ENCODE measurements at regions of chr1 and their contacts with region 1.

Region 1: DNA sequence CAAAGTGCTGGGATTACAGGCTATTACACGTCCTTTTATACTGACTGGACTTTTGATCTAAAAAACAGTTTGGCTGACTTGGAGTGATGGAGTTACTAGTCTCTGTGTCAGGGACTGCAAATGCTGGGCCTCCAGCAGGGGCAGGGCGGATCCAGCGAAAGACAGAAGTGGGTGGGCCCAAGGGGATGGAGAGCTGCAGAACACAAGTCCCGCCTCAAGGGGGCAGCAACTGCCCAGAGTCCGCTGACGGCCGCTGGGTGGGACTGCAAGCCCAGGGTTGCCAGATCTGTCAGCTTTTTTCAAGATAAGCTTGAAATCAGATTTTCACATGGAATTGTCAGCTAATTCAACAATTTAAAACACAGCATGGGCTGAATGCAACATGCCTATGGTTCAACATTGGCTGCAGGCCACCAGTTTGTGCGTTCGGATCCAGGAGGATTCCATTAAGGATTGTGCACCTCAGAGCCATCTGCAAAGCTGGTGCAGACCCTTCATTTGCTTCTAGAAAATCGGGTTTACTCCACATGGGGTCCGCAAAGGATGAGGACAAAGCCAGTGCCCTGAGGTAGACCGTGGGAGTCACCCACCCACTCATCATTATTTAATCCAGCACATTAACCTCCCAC is 10.7 kb downstream of the STMN1 start:
- DNase-seq: peak; percentile 79 to 96
- H3K4me3 ChIP-seq: no peak overlapping the region
- H3K27ac ChIP-seq: no peak overlapping the region
- H3K4me1 ChIP-seq: peaks cover 0 to 16% (median 9%) of the 10 kb centered on the region in 4 experiments; a peak in 6 of 7 replicates
- H3K27me3 ChIP-seq: no peaks in the 10 kb centered on the region
- CTCF ChIP-seq: peak; percentile 95 to 100 (median 99)
- EP300 ChIP-seq: no peak
- POLR2A ChIP-seq: no peak
- RAD21 ChIP-seq: peak; percentile 94 to 98

Region 2: DNA sequence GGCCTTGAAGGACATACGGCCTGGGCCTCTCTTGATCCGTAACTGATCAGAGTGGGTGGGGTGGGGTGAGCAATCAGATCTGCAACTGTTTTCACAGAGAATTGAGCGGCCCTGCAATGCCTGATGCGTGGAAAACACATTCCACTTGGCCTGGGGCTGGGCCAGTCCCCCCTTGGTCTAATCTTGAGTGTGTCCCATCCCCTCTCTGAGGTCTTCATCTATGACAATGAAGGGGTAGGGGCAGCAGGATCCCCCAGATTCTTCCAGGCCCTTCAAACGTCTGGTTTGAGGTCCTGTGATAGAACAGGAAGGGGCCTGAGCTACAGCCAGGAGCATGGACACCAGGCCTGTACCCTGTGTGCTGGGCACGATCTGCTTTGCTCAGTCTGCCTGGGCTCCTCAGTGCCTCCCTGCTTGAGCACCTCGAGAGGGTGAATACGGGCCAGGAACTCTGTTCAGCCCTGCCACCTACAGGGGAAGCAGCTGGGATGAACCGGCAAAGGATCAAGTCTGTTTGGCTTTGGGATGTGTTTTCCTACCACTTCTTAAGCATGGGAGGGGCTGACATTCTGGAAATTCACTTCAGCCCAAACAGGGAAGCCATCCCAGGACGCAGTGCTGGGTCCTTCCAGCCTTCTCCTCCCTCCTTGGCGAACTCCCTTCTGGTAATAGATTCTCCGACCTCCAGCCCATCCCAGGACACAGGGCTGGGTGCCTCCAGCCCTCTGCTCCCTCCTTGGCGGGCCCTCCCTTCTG is 151.5 kb before region 1 on chr1:
- CTCF ChIA-PET with region 1: no interaction called
- POLR2A ChIA-PET with region 1: no interaction called
- DNase-seq: peak; percentile 47 to 63
- H3K4me3 ChIP-seq: no peak overlapping the region
- H3K27ac ChIP-seq: no peak overlapping the region
- H3K4me1 ChIP-seq: peaks cover 12 to 33% (median 17%) of the 10 kb centered on the region in 4 experiments
- H3K27me3 ChIP-seq: no peaks in the 10 kb centered on the region; a peak in 1 of 7 replicates
- CTCF ChIP-seq: peak; percentile 55 to 69 (median 65)
- EP300 ChIP-seq: no peak
- POLR2A ChIP-seq: no peak
- RAD21 ChIP-seq: peak; percentile 61 to 78

Region 3: DNA sequence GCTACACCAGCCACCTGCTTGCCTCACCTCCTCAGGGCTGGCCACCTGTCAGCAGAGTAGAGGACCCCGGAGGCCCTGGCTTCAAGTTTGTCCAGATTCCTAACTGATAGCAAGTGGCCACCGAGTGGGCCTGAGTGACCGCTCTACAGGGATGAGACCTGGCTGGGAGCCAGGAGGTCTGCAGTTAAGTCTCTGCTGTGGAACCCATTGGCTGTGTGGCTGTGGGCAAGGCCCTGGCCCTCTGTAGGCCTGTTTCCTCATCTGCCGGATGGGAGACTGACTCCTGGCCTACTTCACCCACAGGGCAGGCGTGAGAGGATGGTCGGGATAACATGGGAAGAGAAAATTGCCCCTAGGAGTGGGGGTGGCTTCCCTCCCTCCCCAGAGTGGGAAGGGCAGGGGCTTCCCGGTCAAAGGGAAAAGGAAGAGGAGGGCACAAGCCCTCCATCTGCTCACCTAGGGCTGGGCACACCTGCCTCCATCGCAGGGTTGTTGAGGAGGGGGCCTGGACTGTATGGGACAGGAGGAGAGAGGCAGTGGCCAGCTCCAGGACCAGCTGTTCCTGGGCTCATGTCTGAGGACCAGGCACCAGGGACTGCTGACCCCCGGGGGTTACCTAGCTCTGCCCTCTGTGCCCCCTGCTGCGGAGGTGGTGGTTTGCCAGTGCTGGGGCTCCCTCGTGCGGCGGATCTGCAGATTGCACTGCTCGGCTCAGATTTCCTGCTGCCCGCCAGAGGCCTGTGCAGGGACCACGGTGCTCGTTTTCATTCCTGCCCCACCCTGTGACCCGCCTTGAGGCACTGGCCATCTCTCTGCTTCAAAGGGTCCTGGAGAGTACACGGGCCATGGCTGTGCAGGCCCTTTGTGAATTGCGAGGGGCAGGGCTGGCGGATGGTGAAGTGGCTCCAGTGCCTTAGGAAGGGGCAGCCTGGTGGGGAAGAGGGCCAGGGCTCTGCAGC is 84.9 kb before region 1 on chr1:
- CTCF ChIA-PET with region 1: interaction called, 11 read pairs
- POLR2A ChIA-PET with region 1: interaction called, 4 read pairs
- DNase-seq: peak; percentile 59 to 100
- H3K4me3 ChIP-seq: no peak overlapping the region
- H3K27ac ChIP-seq: no peak overlapping the region
- H3K4me1 ChIP-seq: peaks cover 0 to 5% (median under 1%) of the 10 kb centered on the region in 4 experiments; a peak in 2 of 7 replicates
- H3K27me3 ChIP-seq: no peaks in the 10 kb centered on the region
- CTCF ChIP-seq: peak; percentile 98 to 100 (median 99)
- EP300 ChIP-seq: no peak
- POLR2A ChIP-seq: no peak
- RAD21 ChIP-seq: peak; percentile 99 to 100

Region 4: GRCh38 chr1:25834894-25835293 is 60.6 kb before region 1 on chr1:
- CTCF ChIA-PET with region 1: interaction called, 12 read pairs
- POLR2A ChIA-PET with region 1: no interaction called
- DNase-seq: no peak
- H3K4me3 ChIP-seq: no peak overlapping the region
- H3K27ac ChIP-seq: no peak overlapping the region
- H3K4me1 ChIP-seq: no peaks in the 10 kb centered on the region
- H3K27me3 ChIP-seq: no peaks in the 10 kb centered on the region
- CTCF ChIP-seq: no peak
- EP300 ChIP-seq: no peak
- POLR2A ChIP-seq: no peak
- RAD21 ChIP-seq: no peak

Region 5: GRCh38 chr1:25927521-25928265 is 32.2 kb after region 1 on chr1:
- CTCF ChIA-PET with region 1: interaction called, 13 read pairs
- POLR2A ChIA-PET with region 1: interaction called, 6 read pairs
- DNase-seq: no peak
- H3K4me3 ChIP-seq: no peak overlapping the region
- H3K27ac ChIP-seq: no peak overlapping the region
- H3K4me1 ChIP-seq: peaks cover 4 to 12% (median 7%) of the 10 kb centered on the region in 4 experiments
- H3K27me3 ChIP-seq: peaks cover 0 to 4% (median 0%) of the 10 kb centered on the region in 4 experiments; a peak in 2 of 7 replicates
- CTCF ChIP-seq: no peak
- EP300 ChIP-seq: no peak
- POLR2A ChIP-seq: no peak
- RAD21 ChIP-seq: no peak

Region 6: DNA sequence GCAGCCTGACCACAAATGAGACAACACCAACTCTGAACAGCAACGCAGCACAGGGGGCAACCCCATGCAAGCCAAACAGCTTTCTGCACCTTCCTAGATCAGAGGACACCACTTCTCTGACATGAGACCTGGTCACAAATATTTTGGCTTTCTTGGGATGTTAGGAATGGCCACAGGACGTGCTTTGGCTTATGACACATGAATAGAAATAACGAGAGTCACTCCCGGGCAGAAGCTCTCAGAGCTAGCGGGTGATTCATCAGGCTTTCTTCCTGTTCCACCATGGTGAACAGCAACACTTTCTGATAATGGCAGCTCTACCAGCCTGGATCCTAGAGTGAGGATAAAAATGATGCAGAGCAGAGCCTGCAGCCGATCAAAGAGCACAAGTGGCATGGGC is 63.0 kb after region 1 on chr1:
- CTCF ChIA-PET with region 1: interaction called, 37 read pairs
- POLR2A ChIA-PET with region 1: interaction called, 3 read pairs
- DNase-seq: no peak
- H3K4me3 ChIP-seq: no peak overlapping the region
- H3K27ac ChIP-seq: no peak overlapping the region
- H3K4me1 ChIP-seq: peaks cover 0 to 5% (median 3%) of the 10 kb centered on the region in 4 experiments; a peak in 2 of 7 replicates
- H3K27me3 ChIP-seq: no peaks in the 10 kb centered on the region
- CTCF ChIP-seq: no peak
- EP300 ChIP-seq: no peak
- POLR2A ChIP-seq: no peak
- RAD21 ChIP-seq: no peak

Region 7: GRCh38 chr1:25997828-25998761 is 102.6 kb after region 1 on chr1 and contains the start of gene PAFAH2:
- CTCF ChIA-PET with region 1: interaction called, 330 read pairs
- POLR2A ChIA-PET with region 1: interaction called, 13 read pairs
- DNase-seq: peak; percentile 95 to 97
- H3K4me3 ChIP-seq: peak within 1 kb of the TSS; percentile 42 to 86 (median 80)
- H3K27ac ChIP-seq: peak within 1 kb of the TSS; percentile 57; the same call in 1 of the 2 replicates
- H3K4me1 ChIP-seq: peaks cover 2 to 14% (median 8%) of the 10 kb centered on the region in 4 experiments; a peak in 6 of 7 replicates
- H3K27me3 ChIP-seq: no peaks in the 10 kb centered on the region; a peak in 2 of 7 replicates
- CTCF ChIP-seq: peak; percentile 95 to 98 (median 98)
- EP300 ChIP-seq: peak in 1 of 2 experiments; percentile 92; a peak in 1 of 3 replicates
- POLR2A ChIP-seq: no peak; a peak in 1 of 3 replicates
- RAD21 ChIP-seq: peak; percentile 98 to 99
- total RNA-seq, gene PAFAH2: 7.6 and 9.3 TPM in 2 replicates

Region 8: DNA sequence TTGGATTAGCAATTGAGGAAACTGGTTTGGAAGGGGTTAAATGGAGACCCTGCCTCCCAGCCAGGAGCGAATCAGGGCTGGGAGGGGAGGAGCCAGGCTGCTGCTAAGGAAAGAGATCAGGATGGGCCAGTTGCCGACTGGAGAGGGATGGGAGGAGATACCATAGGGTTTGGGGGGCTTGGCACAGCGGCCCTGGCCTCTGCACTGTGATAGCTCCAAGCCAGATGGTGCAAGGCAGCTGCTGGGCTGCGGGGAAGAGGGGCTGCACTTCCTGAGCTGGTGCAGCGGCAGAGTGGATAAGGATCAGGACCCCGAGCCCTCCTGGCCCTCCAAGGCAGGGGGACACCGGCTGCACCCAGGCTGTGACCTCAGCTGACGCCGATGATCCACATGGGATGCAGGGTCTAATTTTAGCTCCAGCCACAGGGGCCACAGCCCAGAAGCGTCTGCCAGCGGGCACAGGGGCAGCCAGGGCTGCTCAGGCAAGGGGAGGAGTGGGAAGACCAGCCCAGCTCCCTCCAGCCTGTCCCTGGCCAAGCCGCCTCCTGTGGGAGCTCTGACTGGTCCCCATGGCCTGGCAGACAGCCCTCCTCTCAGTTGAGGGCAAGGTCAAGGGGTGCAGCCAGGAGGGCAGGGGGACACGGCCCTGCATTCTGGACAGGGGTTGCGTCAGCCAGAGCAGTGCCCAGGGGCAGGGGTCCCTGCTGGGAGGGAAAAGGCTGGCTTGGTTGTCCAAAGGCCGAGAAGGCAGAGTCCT is 126.3 kb after region 1 on chr1 and contains the start of gene EXTL1:
- CTCF ChIA-PET with region 1: interaction called, 17 read pairs
- POLR2A ChIA-PET with region 1: interaction called, 6 read pairs
- DNase-seq: peak; percentile 59 to 81
- H3K4me3 ChIP-seq: peak within 1 kb of the TSS; percentile 36 to 55 (median 38)
- H3K27ac ChIP-seq: no peak within 1 kb of the TSS; the same call in 1 of the 2 replicates
- H3K4me1 ChIP-seq: peaks cover 0 to 19% (median 12%) of the 10 kb centered on the region in 4 experiments; a peak in 6 of 7 replicates
- H3K27me3 ChIP-seq: no peaks in the 10 kb centered on the region
- CTCF ChIP-seq: no peak
- EP300 ChIP-seq: no peak
- POLR2A ChIP-seq: peak in 1 of 2 experiments; percentile 63; a peak in 2 of 3 replicates
- RAD21 ChIP-seq: no peak
- total RNA-seq, gene EXTL1: 1.2 and 1.3 TPM in 2 replicates